Stomach (tissue), 19 donors: ENCODE measurements at regions of chr1 and their contacts with region 1.

Region 1: DNA sequence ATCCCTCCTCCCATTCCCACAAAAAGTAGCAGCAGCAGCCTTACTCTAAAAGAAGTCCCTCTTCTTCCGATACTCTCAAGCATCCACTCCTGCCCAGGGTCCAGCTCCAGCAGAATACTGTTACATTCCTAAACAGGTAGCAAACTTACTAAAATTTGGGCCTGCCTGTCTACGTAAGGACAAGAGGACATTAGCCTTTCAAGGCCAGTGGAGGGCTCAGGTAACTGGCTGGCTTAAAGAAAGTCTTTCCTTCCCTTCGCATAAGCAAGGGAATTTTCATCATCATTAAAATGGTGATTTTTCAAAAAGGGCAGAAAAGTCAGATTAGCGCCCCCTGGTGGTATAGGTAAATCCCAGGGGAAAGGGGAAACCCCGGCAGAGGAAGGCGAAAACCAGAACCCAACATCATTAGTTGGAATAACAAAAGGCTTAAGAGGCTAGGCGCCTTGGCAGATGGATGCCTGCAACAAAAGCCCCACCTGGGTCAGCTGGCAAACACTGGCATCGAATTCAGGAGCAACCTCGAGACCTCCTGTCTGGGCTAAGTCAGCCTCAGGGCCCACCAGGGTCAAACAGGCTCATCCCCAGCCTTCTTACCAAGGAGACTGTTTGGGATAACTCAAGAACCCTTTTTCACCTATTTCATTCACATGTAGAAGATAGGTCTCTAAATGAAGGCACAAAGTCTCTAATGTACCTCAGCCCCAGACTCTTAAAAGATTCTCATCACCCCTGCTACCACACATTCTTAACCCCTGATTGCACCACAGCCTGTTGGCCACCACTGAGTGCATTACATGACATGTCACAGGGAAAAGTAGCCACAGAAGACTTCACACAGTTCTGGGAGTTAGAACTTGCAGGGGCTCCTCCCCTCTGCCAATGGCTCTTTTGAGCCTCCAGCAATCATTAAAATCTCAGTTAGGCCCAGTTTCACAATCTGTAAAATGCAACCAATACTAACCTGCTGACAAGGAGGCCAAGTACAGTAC is 36.7 kb downstream of the ERI3 start:
- DNase-seq: peak in 1 of 2 donors; percentile 62
- H3K4me3 ChIP-seq: no peak overlapping the region
- H3K27ac ChIP-seq: no peak overlapping the region
- H3K4me1 ChIP-seq: no peaks in the 10 kb centered on the region
- H3K27me3 ChIP-seq: no peaks in the 10 kb centered on the region
- CTCF ChIP-seq: peak in 5 of 7 experiments; percentile 56 to 88 (median 67)
- EP300 ChIP-seq: no peak
- POLR2A ChIP-seq: no peak

Region 2: DNA sequence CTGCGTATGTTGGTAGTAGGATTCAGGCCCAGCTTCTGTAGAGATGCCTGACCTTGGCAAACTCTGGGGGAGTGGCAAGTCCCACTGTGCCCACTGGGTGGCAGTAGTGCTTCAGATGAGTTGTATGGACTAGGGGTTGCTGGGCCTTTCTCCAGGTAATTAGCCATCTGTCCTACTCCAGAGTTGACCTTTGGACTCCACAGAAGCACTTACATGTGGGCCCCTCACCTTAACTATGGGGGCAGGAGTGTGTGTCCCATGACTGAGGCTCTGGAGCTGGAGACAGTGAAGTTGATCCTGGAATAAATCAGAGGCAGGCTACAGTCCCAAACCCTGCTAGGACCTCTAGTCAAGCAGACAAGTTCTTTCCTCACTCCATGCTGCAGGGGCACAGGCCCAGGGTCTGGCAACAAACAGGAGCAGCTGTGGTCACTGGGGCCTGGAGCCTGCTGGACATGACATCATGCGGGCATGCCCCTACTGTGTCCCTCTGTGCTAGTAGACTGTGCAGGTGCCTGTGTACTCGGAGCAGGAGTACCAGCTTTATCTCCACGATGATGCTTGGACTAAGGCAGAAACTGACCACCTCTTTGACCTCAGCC is 100.5 kb before region 1 on chr1:
- intact Hi-C with region 1: loop called (anchors 5 kb)
- DNase-seq: peak; percentile 82 to 92
- H3K4me3 ChIP-seq: no peak overlapping the region
- H3K27ac ChIP-seq: no peak overlapping the region
- H3K4me1 ChIP-seq: peaks cover 9 to 30% (median 15%) of the 10 kb centered on the region in 4 donors
- H3K27me3 ChIP-seq: no peaks in the 10 kb centered on the region
- CTCF ChIP-seq: peak in 5 of 7 experiments; percentile 73 to 87 (median 85)
- EP300 ChIP-seq: no peak
- POLR2A ChIP-seq: no peak